PC-3 (cell line): ENCODE measurements at regions of chr19 and their contacts with region 1.

Region 1: GRCh38 chr19:11541238-11541637 is 2.6 kb downstream of the CNN1 start:
- DNase-seq: no peak
- ATAC-seq: no peak
- H3K4me3 ChIP-seq: no peak overlapping the region
- H3K27ac ChIP-seq: no peak overlapping the region
- H3K4me1 ChIP-seq: peaks cover 5% of the 10 kb centered on the region; the same call in 1 of the 2 replicates
- H3K27me3 ChIP-seq: no peaks in the 10 kb centered on the region
- CTCF ChIP-seq: no peak

Region 2: DNA sequence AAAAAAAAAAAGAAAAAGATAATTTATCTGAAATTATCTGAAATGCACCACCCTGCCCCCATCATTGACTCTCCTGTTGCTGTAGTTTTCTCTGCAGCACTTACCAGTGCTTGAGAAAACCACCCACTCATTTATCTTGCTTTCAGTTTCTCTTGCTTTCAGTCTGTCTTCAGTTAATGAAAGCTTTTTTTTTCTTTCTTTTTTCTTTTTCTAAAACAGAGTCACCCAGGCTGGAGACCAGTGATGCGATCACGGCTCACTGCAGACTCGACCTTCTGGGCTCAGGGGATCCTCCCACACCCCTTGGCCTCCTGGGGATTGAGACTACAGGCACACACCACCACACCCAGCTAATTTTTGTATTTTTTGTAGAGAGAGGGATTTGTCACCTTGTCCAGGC is 40.5 kb after region 1 on chr19:
- CTCF ChIA-PET with region 1: no interaction called
- POLR2A ChIA-PET with region 1: interaction called, 29 read pairs
- intact Hi-C with region 1: loop called (anchors 5 kb)
- DNase-seq: no peak
- ATAC-seq: no peak
- H3K4me3 ChIP-seq: no peak overlapping the region
- H3K27ac ChIP-seq: no peak overlapping the region
- H3K4me1 ChIP-seq: no peaks in the 10 kb centered on the region
- H3K27me3 ChIP-seq: no peaks in the 10 kb centered on the region
- CTCF ChIP-seq: no peak